HEK293 (cell line): ENCODE measurements at regions of chr14 and their contacts with region 1.

Region 1: DNA sequence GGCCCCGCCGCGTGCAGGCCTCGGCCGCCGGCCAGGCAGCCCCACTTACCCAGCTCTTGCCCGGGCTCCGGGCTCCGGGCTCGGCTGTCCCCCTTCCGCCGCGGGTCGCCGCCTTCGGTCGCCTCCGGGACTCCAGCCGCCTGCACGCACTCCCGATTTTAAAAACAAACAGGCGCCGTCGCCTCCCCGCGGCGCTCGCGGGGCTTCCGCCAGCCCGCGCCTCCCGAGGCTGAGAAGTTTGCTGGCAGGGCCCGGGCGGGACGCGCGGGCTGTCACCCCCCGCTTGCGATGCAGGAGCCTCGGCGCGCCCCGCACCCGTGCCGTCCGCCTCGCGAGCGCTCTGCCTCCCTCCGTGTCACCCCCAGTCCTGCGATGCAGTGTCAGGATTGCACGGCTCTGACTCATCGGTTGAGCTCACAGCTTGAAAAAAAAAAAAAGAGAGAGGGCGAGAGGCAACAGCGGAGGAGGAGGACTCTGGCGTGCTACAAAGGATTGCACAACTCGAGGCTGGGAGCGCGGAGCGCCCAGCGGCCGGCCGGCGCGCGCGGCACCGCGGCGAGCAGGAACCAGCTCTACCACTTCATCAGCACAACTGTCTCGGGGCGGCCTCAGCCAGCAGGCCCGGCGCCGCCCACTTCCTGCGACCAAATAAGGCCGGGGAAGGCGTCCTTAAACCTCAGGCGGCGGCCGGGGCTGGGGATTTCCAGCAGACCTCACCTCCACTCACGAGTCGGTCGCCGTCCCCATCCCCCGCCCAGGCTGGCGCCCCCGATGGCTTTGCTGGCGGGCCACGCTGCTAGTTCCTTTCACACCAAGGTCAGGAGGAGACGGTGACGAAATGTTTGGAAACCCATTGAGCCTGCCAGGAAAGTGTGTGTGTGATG is 45.8 kb upstream of the PNMA1 start:
- H3K4me3 ChIP-seq: peak overlapping the region; percentile 77
- H3K27ac ChIP-seq: peak overlapping the region; percentile 91
- H3K4me1 ChIP-seq: peaks cover 29% of the 10 kb centered on the region
- CTCF ChIP-seq: 0 out of 2 replicates have a peak, but pooled peaks have one; percentile 9

Region 2: DNA sequence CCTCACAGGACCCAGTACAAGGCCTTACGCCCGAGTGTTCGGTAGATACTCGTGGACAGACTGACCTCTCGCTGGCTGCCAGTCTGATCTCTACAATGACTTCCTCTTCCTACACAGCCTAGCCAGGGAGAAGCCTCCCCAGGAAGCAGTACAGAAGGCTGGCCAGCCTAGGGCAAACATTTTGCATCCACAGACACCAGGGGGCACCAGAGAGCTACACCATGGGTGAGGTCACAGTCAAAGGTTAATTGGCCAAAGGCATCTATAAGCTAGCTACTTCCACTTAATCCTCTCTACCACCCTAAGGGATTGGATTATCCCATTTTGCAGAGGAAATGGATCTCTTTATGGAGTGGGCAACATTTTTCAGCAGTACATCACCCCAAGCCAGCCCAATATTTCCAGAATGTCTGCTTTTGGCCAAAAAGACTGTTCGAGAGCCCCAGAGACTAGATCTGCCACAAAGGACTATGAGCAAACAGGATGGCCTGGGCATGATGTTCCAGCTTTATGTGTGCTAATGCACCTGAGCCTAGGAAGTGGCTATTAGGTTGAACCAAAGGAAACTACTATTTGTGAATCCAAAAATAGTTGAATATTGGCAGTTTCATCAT is 31.1 kb before region 1 on chr14:
- CTCF ChIA-PET with region 1: interaction called, 35 read pairs
- POLR2A ChIA-PET with region 1: interaction called, 6 read pairs
- H3K4me3 ChIP-seq: no peak overlapping the region
- H3K27ac ChIP-seq: no peak overlapping the region
- H3K4me1 ChIP-seq: 0 out of 2 replicates have a peak, but pooled peaks cover 3% of the 10 kb centered on the region
- CTCF ChIP-seq: peak; percentile 44; the same call in 1 of the 2 replicates

Region 3: GRCh38 chr14:73771848-73772638 is 12.1 kb after region 1 on chr14:
- CTCF ChIA-PET with region 1: interaction called, 19 read pairs
- POLR2A ChIA-PET with region 1: interaction called, 10 read pairs
- H3K4me3 ChIP-seq: no peak overlapping the region
- H3K27ac ChIP-seq: peak overlapping the region; percentile 47
- H3K4me1 ChIP-seq: peaks cover 13% of the 10 kb centered on the region
- CTCF ChIP-seq: no peak

Region 4: GRCh38 chr14:73785873-73786695 is 26.1 kb after region 1 on chr14:
- CTCF ChIA-PET with region 1: interaction called, 11 read pairs
- POLR2A ChIA-PET with region 1: interaction called, 52 read pairs
- H3K4me3 ChIP-seq: peak overlapping the region; percentile 71
- H3K27ac ChIP-seq: peak overlapping the region; percentile 97
- H3K4me1 ChIP-seq: peaks cover 18% of the 10 kb centered on the region
- CTCF ChIP-seq: no peak; the same call in 1 of the 2 replicates

Region 5: DNA sequence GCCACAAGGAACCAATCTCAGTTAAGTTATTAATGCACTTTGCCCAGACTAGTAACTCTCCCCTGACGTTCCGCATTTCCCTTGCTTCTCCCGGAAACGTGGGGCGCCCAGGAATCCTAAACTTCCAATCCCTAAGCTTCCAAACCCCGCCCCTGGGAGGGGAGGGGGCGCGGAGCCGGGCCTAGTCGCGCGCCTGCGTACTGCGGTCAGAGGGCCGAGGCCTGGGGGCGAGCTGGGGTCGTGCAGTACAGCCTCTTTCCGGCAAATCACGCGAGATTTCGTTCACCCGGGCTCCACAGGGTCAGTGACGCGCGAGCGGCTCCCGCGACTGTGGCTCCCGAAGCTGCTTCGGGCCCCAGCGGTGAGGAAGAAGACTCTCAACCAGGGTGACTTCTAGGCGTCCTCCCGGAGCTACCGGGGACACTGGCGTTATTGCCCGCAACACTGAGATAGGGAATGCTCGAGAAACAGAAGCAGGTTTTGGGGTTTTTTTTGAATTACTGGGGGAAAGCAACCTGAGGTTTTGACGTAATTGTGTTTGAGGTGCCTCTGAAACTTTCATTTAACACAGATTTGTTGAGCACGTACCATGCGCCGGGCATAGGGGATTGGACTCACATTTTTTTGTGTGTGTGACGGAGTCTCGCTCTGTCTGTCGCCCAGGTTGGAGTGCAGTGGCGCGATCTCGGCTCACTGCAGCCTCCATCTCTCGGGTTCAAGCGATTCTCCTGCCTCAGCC is 91.9 kb after region 1 on chr14 and contains the start of gene PTGR2:
- CTCF ChIA-PET with region 1: no interaction called
- POLR2A ChIA-PET with region 1: interaction called, 18 read pairs
- H3K4me3 ChIP-seq: peak within 1 kb of the TSS; percentile 70
- H3K27ac ChIP-seq: peak within 1 kb of the TSS; percentile 55
- H3K4me1 ChIP-seq: no peaks in the 10 kb centered on the region; the same call in 1 of the 2 replicates
- CTCF ChIP-seq: no peak